ENCODE measurements at regions of chr6 and their contacts with region 1.

Region 1: DNA sequence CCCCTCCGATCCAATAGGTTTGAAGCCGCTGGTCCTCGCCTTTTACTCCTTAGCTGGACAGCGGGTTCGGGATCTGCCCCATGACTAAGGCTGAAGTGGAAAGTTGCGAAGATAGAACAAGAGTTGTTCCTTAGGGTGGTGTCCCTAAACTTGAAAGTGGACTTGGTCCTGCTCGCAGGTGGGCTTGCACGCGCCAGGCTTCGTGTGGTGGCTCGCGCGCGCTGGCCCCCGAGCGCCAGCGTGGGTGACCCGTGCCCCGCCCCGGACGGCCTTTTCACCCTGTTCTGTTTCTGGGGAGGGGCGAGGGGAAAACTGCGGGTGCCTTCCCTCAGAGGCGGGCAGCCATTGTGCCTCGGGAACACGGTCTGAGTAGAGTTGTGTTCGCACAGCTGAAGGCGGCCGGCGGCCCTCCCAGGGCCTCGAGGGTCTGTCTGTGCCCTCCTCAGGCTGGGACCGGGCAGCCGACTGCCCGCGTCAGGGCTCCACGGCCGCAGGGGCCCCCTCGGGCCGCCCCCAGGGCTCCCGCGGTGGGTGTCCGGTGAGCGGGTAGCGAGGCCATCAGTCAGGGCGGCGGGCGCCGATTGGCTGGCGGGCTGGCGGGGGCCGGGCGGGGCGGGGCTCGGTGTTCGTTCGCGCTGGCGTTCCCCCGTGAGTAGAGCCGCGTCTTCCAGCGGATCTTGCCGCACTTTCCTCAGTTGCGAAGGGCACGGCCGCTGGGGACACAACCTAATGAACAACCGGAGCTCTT is 33.0 kb downstream of the RREB1 start:
- DNase-seq: peak; percentile 94
- H3K4me3 Mint-ChIP-seq: peak overlapping the region; percentile 85
- H3K27ac Mint-ChIP-seq: peak overlapping the region; percentile 87
- H3K4me1 Mint-ChIP-seq: peaks cover 54% of the 10 kb centered on the region
- H3K27me3 Mint-ChIP-seq: no peaks in the 10 kb centered on the region

Region 2: GRCh38 chr6:6793388-6794250 is 347.2 kb before region 1 on chr6:
- intact Hi-C with region 1: loop called (anchors 10 kb)
- DNase-seq: peak; percentile 64
- H3K4me3 Mint-ChIP-seq: peak overlapping the region; percentile 35
- H3K27ac Mint-ChIP-seq: peak overlapping the region; percentile 35
- H3K4me1 Mint-ChIP-seq: peaks cover 43% of the 10 kb centered on the region
- H3K27me3 Mint-ChIP-seq: peaks cover 4% of the 10 kb centered on the region

Region 3: GRCh38 chr6:7073821-7074525 is 66.8 kb before region 1 on chr6:
- intact Hi-C with region 1: loop called (anchors 2 kb)
- DNase-seq: peak; percentile 89
- H3K4me3 Mint-ChIP-seq: no peak overlapping the region
- H3K27ac Mint-ChIP-seq: peak overlapping the region; percentile 51
- H3K4me1 Mint-ChIP-seq: peaks cover 12% of the 10 kb centered on the region
- H3K27me3 Mint-ChIP-seq: peaks cover 66% of the 10 kb centered on the region

Region 4: GRCh38 chr6:7086488-7086887 is 54.3 kb before region 1 on chr6:
- intact Hi-C with region 1: loop called (anchors 2 kb)
- DNase-seq: peak; percentile 76
- H3K4me3 Mint-ChIP-seq: peak overlapping the region; percentile 76
- H3K27ac Mint-ChIP-seq: no peak overlapping the region
- H3K4me1 Mint-ChIP-seq: peaks cover 25% of the 10 kb centered on the region
- H3K27me3 Mint-ChIP-seq: peaks cover 54% of the 10 kb centered on the region

Region 5: GRCh38 chr6:7107578-7108195 is 33.1 kb before region 1 on chr6 and contains the start of gene RREB1:
- intact Hi-C with region 1: loop called (anchors 1 kb)
- DNase-seq: peak; percentile 86
- H3K4me3 Mint-ChIP-seq: peak within 1 kb of the TSS; percentile 96
- H3K27ac Mint-ChIP-seq: peak within 1 kb of the TSS; percentile 96
- H3K4me1 Mint-ChIP-seq: peaks cover 33% of the 10 kb centered on the region
- H3K27me3 Mint-ChIP-seq: peaks cover 8% of the 10 kb centered on the region
- total RNA-seq, gene RREB1: 13.9 and 16.8 TPM in 2 replicates

Region 6: GRCh38 chr6:7166410-7167305 is 25.9 kb after region 1 on chr6:
- intact Hi-C with region 1: no loop called
- DNase-seq: no peak
- H3K4me3 Mint-ChIP-seq: no peak overlapping the region
- H3K27ac Mint-ChIP-seq: no peak overlapping the region
- H3K4me1 Mint-ChIP-seq: peaks cover 9% of the 10 kb centered on the region
- H3K27me3 Mint-ChIP-seq: no peaks in the 10 kb centered on the region

Region 7: DNA sequence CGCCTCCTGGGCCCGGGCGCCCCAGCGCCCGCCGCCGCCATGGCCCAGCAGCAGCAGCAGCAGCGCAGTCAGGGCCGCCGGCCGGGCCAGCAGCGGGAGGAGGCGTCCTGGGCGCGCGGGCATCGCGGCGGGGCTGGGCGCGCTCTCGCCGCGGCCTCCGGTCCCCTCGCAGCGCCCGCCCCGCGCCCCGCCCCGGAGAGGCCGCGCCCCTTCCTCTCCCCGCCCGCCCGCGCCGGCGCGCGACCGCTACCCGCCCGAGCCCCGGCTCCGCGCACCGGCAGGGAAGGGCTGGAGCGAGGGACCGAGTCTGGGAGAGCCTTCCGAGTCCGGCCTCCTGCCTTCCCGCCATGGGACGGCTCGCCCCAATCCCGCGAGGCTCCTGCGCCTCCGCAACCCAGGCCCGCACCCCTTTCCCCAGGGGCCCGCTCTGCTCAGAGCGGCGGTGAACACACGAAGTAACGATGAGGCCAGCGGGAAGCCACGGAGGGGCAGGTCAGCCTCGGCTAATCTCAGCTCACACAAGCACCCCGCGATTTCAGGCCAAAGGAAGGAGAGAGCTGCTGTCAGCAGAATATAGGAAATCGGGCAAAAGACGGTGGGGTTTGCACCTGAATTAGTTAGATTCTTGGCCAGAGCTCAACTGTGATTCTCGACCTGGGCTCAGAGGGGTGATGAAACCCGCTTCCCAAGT is 770.0 kb after region 1 on chr6 and contains the start of gene TXNDC5:
- intact Hi-C with region 1: loop called (anchors 10 kb)
- DNase-seq: peak; percentile 93
- H3K4me3 Mint-ChIP-seq: peak within 1 kb of the TSS; percentile 92
- H3K27ac Mint-ChIP-seq: peak within 1 kb of the TSS; percentile 81
- H3K4me1 Mint-ChIP-seq: peaks cover 17% of the 10 kb centered on the region
- H3K27me3 Mint-ChIP-seq: no peaks in the 10 kb centered on the region
- total RNA-seq, gene TXNDC5: 111 and 112 TPM in 2 replicates